Esophagus muscularis mucosa (tissue), 4 donors: ENCODE measurements at regions of chr12 and their contacts with region 1.

Region 1: GRCh38 chr12:53325511-53326061 is 4.2 kb upstream of the AAAS start:
- DNase-seq: no peak
- H3K4me3 ChIP-seq: peak overlapping the region; percentile 74 to 87 (median 74)
- H3K27ac ChIP-seq: peak overlapping the region; percentile 90 to 98 (median 94)
- H3K4me1 ChIP-seq: peaks cover 24 to 37% (median 35%) of the 10 kb centered on the region in 4 donors
- H3K27me3 ChIP-seq: peaks cover 0 to 10% (median 0%) of the 10 kb centered on the region in 4 donors
- CTCF ChIP-seq: peak in 2 of 3 experiments; percentile 9 to 19
- EP300 ChIP-seq: no peak
- POLR2A ChIP-seq: no peak

Region 2: DNA sequence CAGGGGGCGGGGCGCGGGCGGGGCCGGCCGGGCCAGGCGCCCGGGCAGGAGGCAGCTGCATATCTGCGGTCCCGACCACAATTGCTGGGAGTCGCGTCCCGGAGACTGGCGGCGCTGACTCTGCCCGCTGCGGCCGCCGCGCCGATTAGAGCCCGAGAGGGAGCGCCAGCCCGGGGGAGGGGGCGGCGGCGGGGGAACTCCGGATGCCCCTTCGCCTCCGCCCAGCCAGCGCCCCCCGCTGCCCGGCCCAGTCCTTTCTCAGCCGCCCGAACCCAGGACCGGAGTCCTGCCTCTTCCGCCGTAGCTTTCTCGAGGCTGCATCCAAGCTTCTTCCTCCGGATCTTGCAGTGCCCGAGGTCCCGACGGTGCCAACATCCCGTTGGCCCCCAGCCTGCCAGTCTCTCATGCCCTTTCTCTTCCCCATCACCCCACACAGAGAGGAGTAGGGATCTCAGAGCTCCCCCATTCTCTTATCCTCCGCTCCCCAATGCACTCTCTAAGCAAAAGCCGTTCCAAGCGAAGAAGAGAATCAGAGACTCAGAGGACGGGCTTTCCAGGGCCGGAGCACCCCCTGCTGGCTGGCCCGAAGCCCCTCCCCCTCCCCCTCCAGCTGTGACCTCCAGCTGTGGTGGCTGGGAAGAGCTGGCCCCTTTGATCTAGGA is 19.4 kb after region 1 on chr12:
- intact Hi-C with region 1: loop called (anchors 2 kb)
- DNase-seq: peak; percentile 93
- H3K4me3 ChIP-seq: peak overlapping the region; percentile 60 to 86 (median 78)
- H3K27ac ChIP-seq: peak overlapping the region; percentile 79 to 93 (median 84)
- H3K4me1 ChIP-seq: peaks cover 11 to 23% (median 18%) of the 10 kb centered on the region in 4 donors
- H3K27me3 ChIP-seq: no peaks in the 10 kb centered on the region
- CTCF ChIP-seq: peak; percentile 78 to 84 (median 82)
- EP300 ChIP-seq: no peak
- POLR2A ChIP-seq: no peak